ENCODE measurements at regions of chr3 and their contacts with region 1.

Region 1: GRCh38 chr3:142828703-142829305 is 60.1 kb downstream of the PCOLCE2 start:
- DNase-seq: peak; percentile 88
- ATAC-seq: peak; percentile 98
- H3K4me3 Mint-ChIP-seq: no peak overlapping the region
- H3K27ac Mint-ChIP-seq: no peak overlapping the region
- H3K4me1 Mint-ChIP-seq: no peaks in the 10 kb centered on the region
- H3K27me3 Mint-ChIP-seq: no peaks in the 10 kb centered on the region
- CTCF ChIP-seq: peak; percentile 73

Region 2: GRCh38 chr3:142787719-142788118 is 41.1 kb before region 1 on chr3:
- CTCF ChIA-PET with region 1: interaction called, 10 read pairs
- POLR2A ChIA-PET with region 1: no interaction called
- DNase-seq: no peak
- ATAC-seq: no peak
- H3K4me3 Mint-ChIP-seq: no peak overlapping the region
- H3K27ac Mint-ChIP-seq: no peak overlapping the region
- H3K4me1 Mint-ChIP-seq: peaks cover 11% of the 10 kb centered on the region
- H3K27me3 Mint-ChIP-seq: no peaks in the 10 kb centered on the region
- CTCF ChIP-seq: no peak

Region 3: GRCh38 chr3:142857056-142857455 is 28.3 kb after region 1 on chr3:
- CTCF ChIA-PET with region 1: interaction called, 19 read pairs
- POLR2A ChIA-PET with region 1: no interaction called
- DNase-seq: peak; percentile 56
- ATAC-seq: peak; percentile 91
- H3K4me3 Mint-ChIP-seq: no peak overlapping the region
- H3K27ac Mint-ChIP-seq: no peak overlapping the region
- H3K4me1 Mint-ChIP-seq: peaks cover 61% of the 10 kb centered on the region
- H3K27me3 Mint-ChIP-seq: no peaks in the 10 kb centered on the region; the same call in 1 of the 2 replicates
- CTCF ChIP-seq: no peak

Region 4: GRCh38 chr3:142912402-142913172 is 83.8 kb after region 1 on chr3:
- CTCF ChIA-PET with region 1: interaction called, 16 read pairs
- POLR2A ChIA-PET with region 1: no interaction called
- DNase-seq: no peak
- ATAC-seq: no peak
- H3K4me3 Mint-ChIP-seq: no peak overlapping the region
- H3K27ac Mint-ChIP-seq: no peak overlapping the region
- H3K4me1 Mint-ChIP-seq: 0 out of 2 replicates have a peak, but pooled peaks cover 3% of the 10 kb centered on the region
- H3K27me3 Mint-ChIP-seq: no peaks in the 10 kb centered on the region
- CTCF ChIP-seq: no peak

Region 5: DNA sequence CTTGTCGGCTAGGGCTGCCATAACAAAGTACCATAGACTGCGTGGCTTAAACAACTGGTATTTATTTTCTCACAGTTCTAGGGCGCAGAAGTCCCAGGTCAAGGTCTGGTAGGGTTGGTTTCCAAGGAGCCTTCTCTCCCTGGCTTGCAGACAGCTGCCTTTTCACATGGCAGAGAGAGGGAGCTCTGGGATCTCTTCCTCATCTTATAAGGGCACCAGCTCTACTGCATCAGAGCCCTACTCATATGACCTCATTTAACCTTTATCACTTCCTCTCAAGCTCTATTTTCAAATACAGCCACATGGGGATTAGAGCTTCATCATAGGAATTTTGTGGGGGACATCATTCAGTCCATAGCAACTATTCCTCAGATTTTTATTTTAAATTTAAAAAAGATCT is 152.3 kb after region 1 on chr3:
- CTCF ChIA-PET with region 1: interaction called, 20 read pairs
- POLR2A ChIA-PET with region 1: no interaction called
- DNase-seq: no peak
- ATAC-seq: peak; percentile 89
- H3K4me3 Mint-ChIP-seq: no peak overlapping the region
- H3K27ac Mint-ChIP-seq: no peak overlapping the region
- H3K4me1 Mint-ChIP-seq: peaks cover 18% of the 10 kb centered on the region
- H3K27me3 Mint-ChIP-seq: no peaks in the 10 kb centered on the region
- CTCF ChIP-seq: no peak

Region 6: GRCh38 chr3:142993958-142994442 is 165.2 kb after region 1 on chr3:
- CTCF ChIA-PET with region 1: interaction called, 26 read pairs
- POLR2A ChIA-PET with region 1: no interaction called
- DNase-seq: peak; percentile 58
- ATAC-seq: peak; percentile 63
- H3K4me3 Mint-ChIP-seq: no peak overlapping the region
- H3K27ac Mint-ChIP-seq: peak overlapping the region; percentile 17; the same call in 1 of the 2 replicates
- H3K4me1 Mint-ChIP-seq: peaks cover 3% of the 10 kb centered on the region; the same call in 1 of the 2 replicates
- H3K27me3 Mint-ChIP-seq: no peaks in the 10 kb centered on the region
- CTCF ChIP-seq: peak; percentile 52

Region 7: GRCh38 chr3:143182866-143183664 is 354.3 kb after region 1 on chr3:
- CTCF ChIA-PET with region 1: no interaction called
- POLR2A ChIA-PET with region 1: no interaction called
- DNase-seq: no peak
- ATAC-seq: no peak
- H3K4me3 Mint-ChIP-seq: no peak overlapping the region
- H3K27ac Mint-ChIP-seq: no peak overlapping the region
- H3K4me1 Mint-ChIP-seq: no peaks in the 10 kb centered on the region
- H3K27me3 Mint-ChIP-seq: no peaks in the 10 kb centered on the region
- CTCF ChIP-seq: no peak